ENCODE measurements at regions of chr3 and their contacts with region 1.

Region 1: GRCh38 chr3:26118165-26118564 is 328.3 kb downstream of the OXSM start:
- DNase-seq: no peak

Region 2: DNA sequence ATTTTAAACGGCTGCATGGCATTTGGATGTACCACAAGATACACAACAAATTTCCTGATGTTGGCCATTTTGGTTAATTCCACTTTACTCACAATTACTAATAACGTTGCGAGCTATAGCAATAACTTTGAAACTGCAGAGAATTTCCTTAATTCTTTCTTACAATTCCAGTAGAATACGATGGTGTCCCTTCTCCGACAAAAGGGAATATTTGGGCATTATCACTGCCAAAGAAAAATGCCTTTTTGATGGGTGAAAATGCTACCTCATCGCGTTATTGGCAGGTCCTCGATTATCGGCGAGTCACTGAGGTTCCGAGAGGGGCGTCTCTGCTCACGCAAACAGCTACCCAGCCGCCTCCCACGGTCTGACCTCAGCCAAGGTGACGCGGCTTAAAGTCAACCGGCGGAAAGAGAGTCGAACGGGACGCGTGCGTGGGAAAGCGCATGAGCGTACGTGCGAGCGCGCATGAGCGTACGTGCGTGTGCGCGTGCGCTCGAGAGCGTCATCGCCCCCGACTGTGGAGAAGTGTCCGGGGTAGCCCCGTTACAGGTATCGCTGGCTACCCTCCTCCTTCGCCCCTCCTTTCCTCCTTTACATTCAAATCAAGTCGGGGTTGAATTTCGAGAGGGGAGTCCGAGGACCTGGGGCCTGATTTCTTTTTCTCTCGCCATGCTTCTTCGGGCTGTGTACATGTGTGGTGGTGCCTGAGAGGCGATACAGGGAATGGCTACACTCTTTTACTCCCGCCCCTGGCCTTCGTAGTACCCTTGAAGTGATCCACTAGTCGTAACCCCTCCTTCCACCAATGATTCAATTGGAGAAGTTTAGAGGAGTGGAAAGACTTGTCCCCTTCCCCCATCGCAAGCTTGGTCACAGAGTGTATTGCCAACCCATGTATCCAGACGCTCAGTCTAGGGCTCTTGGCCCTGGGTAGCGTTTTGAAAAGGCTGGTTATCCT is 328.3 kb before region 1 on chr3 and contains the start of gene OXSM:
- intact Hi-C with region 1: loop called (anchors 5 kb)
- DNase-seq: peak; percentile 93
- total RNA-seq, gene OXSM: 11.0 TPM

Region 3: DNA sequence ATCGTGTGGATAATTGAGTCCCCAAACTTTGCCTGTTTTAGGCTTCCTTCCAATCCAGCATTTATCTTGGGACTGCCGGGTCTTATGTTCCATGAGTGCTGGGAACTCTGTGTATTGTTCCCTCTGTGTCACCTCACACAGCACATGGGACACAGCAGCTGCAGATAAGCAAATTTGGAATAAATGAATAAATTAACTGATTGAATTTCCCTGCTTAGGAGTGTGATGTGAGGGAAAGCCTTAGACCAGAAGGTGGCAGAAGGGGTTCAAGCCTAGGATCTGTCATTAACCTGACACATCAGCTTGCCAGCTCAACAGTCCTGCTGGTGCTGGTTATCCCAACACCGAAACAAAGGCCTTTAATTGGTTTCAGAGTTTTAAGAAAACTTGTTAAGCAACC is 214.0 kb before region 1 on chr3:
- intact Hi-C with region 1: loop called (anchors 2 kb)
- DNase-seq: no peak

Region 4: GRCh38 chr3:25973122-25973521 is 145.0 kb before region 1 on chr3:
- intact Hi-C with region 1: no loop called
- DNase-seq: no peak

Region 5: DNA sequence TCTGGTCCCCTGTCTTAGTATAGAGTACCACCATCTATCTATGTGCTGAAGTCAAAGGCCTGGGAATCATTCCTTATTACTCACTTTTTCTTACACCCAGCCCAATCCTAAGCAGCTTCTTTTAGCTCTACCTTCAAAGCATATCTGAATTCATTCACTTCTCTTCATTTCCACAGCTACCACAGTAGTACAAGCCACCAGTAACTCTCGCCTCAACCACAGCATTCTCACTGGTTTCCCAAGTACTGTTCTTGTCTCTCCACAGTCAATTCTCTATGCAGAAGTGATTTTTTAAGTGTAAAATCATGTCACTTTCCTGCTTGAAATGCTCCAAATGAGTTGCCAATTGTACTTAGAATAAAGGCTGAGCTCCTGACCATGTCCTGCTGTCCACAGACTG is 73.4 kb after region 1 on chr3:
- intact Hi-C with region 1: loop called (anchors 2 kb)
- DNase-seq: no peak

Region 6: DNA sequence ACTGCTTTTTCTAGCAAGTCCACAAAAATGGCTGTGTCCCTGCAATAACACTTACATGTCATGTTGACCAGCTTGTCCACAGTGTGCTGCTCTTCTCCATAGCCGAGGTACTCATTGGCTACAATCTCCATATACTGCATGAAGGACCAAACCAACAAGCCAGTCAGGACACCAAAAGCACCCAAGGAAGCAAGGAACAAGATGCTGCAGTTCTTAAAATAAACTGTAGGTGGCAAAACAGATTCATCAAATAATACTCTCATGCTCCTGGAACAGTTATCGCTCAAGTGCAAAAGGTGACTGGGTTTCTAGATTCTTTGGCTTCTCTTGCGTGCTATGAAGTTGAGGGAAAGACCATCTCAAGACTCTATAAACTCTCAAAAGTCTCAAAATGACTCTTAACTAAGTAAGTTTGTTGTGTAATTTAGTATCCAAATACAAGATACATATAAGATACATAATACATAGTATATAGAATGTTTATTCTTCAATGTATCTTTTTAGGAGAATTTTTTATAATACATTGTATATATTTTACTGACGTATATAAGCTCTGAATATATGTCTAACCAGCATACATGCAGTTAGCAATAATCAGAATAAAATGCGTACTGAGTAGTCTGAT is 1194.0 kb after region 1 on chr3:
- intact Hi-C with region 1: no loop called
- DNase-seq: no peak

Measured in cardiac septum (tissue), 1 donor.